Activated T-helper 1 cell treated with anti-CD3 and anti-CD28 coated beads, Interleukin-12 subunit alpha, Interleukin-12 subunit beta, Interleukin-2, Interleukin-4 antibody, amounts not matched to agents 30 ng/mL and 10 ng/mL and 1 ng/mL, durations not matched to agents 14 hours and 24 hours and 36 hours (primary cell): ENCODE measurements at regions of chr16 and their contacts with region 1.

Region 1: DNA sequence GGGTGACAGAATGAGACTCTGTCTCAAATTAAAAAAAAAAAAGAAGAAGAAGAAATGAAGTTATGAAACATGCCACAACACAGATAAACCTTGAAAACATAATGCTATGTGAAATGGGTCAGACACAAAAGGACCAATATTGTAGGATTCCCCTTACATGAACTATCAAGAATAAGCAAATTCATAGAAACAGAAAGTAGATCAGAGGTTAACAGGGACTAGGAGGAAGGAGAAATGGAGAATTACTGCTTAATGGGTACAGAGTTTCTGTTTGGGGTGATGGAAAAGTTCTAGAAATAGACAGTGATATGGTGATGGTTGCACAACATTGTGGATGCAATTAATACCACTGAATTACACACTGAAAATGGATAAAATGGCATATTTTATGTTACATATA is 16.3 kb downstream of the RANBP10 start:
- DNase-seq: no peak
- H3K4me3 Mint-ChIP-seq: no peak overlapping the region
- H3K27ac Mint-ChIP-seq: no peak overlapping the region
- H3K4me1 Mint-ChIP-seq: peaks cover 6% of the 10 kb centered on the region
- H3K27me3 Mint-ChIP-seq: no peaks in the 10 kb centered on the region

Region 2: GRCh38 chr16:67758006-67758405 is 32.1 kb before region 1 on chr16:
- intact Hi-C with region 1: loop called (anchors 5 kb)
- DNase-seq: no peak
- H3K4me3 Mint-ChIP-seq: no peak overlapping the region
- H3K27ac Mint-ChIP-seq: no peak overlapping the region
- H3K4me1 Mint-ChIP-seq: peaks cover 12% of the 10 kb centered on the region
- H3K27me3 Mint-ChIP-seq: no peaks in the 10 kb centered on the region

Region 3: DNA sequence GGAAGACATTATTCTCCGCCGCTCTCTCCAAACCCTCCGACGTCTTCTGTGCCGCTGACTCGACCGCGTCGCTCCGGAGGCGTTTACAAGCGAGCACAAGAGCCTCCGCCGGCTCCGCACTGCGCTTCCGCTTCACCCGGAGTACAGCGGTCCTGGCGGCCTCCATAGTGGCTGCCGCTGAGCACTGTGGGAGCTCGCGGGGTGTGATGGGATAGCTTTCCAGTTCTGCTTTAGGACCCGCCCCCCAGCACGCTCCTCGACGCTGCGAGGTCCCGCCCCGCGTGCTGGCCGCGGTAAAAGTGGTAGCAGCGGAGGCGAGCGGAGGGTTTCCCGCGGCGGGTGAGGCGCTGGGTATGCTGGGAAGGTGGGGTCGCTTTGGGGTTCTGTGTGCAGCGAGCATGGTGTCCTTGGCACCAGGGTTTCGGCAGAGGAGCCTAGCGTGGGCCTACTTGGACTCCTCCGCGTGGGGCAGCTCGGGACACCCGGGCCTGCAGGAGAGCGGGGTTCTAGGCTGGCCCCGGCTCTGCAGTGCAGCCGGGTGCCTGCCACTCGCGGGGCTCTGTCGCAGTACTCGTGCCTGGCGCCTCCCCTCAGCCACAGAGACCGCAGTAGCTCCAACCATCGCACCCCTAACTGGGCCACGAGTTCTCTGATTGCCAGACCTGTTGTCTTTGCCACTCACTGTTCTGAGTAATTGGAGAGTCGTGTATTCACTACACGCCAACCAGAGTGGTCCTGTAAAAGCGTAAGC is 520.9 kb after region 1 on chr16 and contains the starts of genes PRMT7 and SLC7A6OS:
- intact Hi-C with region 1: no loop called
- DNase-seq: peak; percentile 92
- H3K4me3 Mint-ChIP-seq: peak within 1 kb of the TSS; percentile 99
- H3K27ac Mint-ChIP-seq: peak within 1 kb of the TSS; percentile 98
- H3K4me1 Mint-ChIP-seq: peaks cover 43% of the 10 kb centered on the region
- H3K27me3 Mint-ChIP-seq: no peaks in the 10 kb centered on the region
- total RNA-seq, gene PRMT7: 80.6 and 85.2 TPM in 2 replicates
- total RNA-seq, gene SLC7A6OS: 26.5 and 27.6 TPM in 2 replicates